CD14-positive monocyte (primary cell): ENCODE measurements at regions of chr7 and their contacts with region 1.

Region 1: DNA sequence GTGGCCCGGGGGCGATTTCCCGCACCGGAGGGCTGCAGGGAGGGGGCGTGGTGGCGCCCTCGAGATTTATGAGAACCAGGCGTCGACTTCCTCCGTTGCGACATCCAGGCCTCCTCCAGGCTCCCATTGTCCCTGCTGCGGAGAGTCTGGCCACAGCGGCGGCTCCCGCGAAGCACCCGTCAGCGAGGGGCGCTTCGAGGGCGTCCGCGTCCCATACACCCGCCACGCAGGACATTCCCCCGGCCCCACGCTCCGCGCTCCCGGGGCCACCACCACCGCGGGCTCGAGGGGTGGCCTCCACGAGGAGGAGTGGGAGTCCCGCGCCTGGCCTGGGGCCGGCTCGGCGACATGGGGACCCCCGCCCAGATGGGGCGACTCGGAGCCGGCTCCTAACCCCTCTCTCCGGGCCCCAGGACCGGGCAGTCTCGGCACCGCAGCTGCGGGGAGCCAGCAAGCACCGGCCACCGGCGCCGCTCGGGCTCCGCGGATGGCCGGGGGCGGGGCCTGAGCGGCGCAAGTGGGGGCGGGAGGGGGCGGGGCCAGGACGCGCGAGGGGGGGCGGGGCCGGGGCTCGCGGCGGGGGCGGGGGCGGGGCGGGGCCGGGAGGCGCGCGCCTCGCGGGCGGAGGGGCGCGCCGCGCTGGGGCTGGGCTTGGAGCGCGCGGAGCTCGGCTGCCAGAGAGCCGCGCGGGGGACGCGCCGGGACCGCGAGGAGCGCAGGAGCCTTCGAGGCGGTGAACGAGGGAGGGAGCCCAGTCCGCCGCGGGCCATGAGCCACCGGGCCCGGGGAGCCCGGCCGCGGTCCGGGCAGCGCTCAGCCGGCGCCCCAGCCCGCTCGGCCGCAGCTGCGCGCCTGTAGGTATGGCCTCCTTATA is at the start of gene SH2B2:
- DNase-seq: peak; percentile 69 to 78 (median 78)
- H3K4me3 ChIP-seq: peak within 1 kb of the TSS; percentile 70 to 93 (median 78)
- H3K4me3 Mint-ChIP-seq: peak within 1 kb of the TSS; percentile 98 to 99
- H3K27ac ChIP-seq: peak within 1 kb of the TSS; percentile 64 to 87
- H3K27ac Mint-ChIP-seq: peak within 1 kb of the TSS; percentile 64 to 95 (median 85)
- H3K4me1 ChIP-seq: peaks cover 51 to 54% of the 10 kb centered on the region in 2 donors
- H3K4me1 Mint-ChIP-seq: peaks cover 42% of the 10 kb centered on the region
- H3K27me3 ChIP-seq: no peaks in the 10 kb centered on the region
- H3K27me3 Mint-ChIP-seq: peaks cover 0 to 9% (median 2%) of the 10 kb centered on the region in 3 donors
- CTCF ChIP-seq: no peak
- polyA plus RNA-seq, gene SH2B2: 3.8 to 26.3 (median 4.7) TPM

Region 2: DNA sequence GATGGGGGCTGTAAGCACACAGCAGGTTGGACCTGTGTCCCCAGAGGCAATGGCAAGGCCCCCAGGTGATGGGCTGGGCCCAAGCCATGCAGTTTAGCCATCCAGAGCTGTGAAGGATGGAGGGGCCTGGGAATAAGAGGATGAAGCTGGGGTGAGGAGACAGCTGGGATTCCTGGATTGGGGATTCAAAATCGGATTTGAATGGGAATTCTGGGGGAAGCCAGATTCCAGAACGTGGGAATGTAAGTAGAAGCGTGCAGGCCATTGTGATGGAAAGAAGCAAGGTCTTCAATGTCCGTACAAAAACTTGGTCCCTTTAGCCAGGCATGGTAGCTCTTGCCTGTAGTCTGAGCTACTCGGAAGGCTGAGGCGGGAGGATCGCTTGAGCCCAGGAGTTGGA is 10.0 kb after region 1 on chr7:
- intact Hi-C with region 1: no loop called
- DNase-seq: no peak
- H3K4me3 ChIP-seq: no peak overlapping the region
- H3K4me3 Mint-ChIP-seq: no peak overlapping the region
- H3K27ac ChIP-seq: no peak overlapping the region
- H3K27ac Mint-ChIP-seq: no peak overlapping the region
- H3K4me1 ChIP-seq: peaks cover 9 to 11% of the 10 kb centered on the region in 2 donors
- H3K4me1 Mint-ChIP-seq: peaks cover 22% of the 10 kb centered on the region
- H3K27me3 ChIP-seq: no peaks in the 10 kb centered on the region
- H3K27me3 Mint-ChIP-seq: peaks cover 0 to 1% (median 0%) of the 10 kb centered on the region in 3 donors
- CTCF ChIP-seq: no peak

Region 3: DNA sequence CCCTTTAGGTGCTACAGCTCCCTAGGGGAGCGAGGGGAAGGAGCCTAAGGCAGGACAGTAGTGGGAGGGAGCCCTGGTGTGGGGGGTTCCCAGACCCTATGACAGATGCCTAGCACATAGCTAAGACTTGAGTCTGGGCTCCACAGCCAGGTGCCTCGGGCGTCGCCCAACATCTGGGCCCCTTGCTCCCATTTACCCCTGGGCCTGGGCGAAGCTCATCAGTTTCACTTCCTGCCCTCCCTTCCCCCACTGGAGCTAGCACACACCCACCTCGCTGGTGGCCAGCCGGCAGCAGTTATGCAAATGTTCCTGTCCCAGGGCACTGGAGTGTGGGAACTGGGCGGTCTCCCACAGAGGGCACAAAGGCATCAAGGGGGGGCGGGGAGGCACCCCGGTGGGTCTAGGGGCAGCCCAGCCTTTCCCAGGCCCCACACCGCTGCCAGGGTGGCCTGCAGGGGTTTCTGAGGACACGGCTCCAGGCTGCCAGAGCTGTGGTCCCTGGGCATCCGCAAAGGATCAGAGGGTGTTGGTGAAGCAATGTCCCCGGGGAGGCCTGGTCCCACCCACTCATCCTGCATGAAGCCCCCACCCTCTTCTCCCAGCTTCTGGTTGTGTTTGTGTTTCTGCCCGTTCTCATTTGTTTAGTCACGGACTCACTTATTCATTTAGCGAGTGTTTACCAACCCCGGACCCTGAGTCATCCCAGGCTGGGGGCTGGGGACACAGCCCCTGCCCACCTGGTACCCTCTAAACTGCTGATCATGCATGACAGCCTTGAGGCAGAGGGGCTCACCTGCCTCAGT is 20.6 kb after region 1 on chr7:
- intact Hi-C with region 1: loop called in 1 of 2 experiments (anchors 2 kb)
- DNase-seq: peak; percentile 68 to 70 (median 70)
- H3K4me3 ChIP-seq: peak overlapping the region; percentile 0 to 73 (median 41)
- H3K4me3 Mint-ChIP-seq: peak overlapping the region; percentile 72 to 79
- H3K27ac ChIP-seq: peak overlapping the region; percentile 48 to 83
- H3K27ac Mint-ChIP-seq: peak overlapping the region; percentile 11 to 87 (median 78)
- H3K4me1 ChIP-seq: peaks cover 22 to 35% of the 10 kb centered on the region in 2 donors
- H3K4me1 Mint-ChIP-seq: peaks cover 34% of the 10 kb centered on the region
- H3K27me3 ChIP-seq: no peaks in the 10 kb centered on the region
- H3K27me3 Mint-ChIP-seq: peaks cover 0 to 2% (median 0%) of the 10 kb centered on the region in 3 donors
- CTCF ChIP-seq: no peak